ENCODE measurements at regions of chr15 and their contacts with region 1.

Region 1: GRCh38 chr15:42474827-42475226 is 16.1 kb downstream of the ZNF106 start:
- DNase-seq: no peak
- ATAC-seq: no peak
- H3K4me3 ChIP-seq: no peak overlapping the region
- H3K27ac ChIP-seq: no peak overlapping the region
- H3K4me1 ChIP-seq: peaks cover 3% of the 10 kb centered on the region; the same call in 1 of the 2 replicates
- H3K27me3 ChIP-seq: no peaks in the 10 kb centered on the region
- CTCF ChIP-seq: no peak
- POLR2A ChIP-seq: no peak
- RAD21 ChIP-seq: no peak

Region 2: GRCh38 chr15:41849861-41850260 is 625.0 kb before region 1 on chr15:
- CTCF ChIA-PET with region 1: no interaction called
- POLR2A ChIA-PET with region 1: no interaction called
- dilution Hi-C with region 1: no loop called
- in situ Hi-C with region 1: no loop called
- intact Hi-C with region 1: no loop called
- DNase-seq: no peak
- ATAC-seq: no peak
- H3K4me3 ChIP-seq: no peak overlapping the region
- H3K27ac ChIP-seq: no peak overlapping the region
- H3K4me1 ChIP-seq: no peaks in the 10 kb centered on the region; the same call in 1 of the 2 replicates
- H3K27me3 ChIP-seq: peaks cover 12% of the 10 kb centered on the region; the same call in 1 of the 2 replicates
- CTCF ChIP-seq: no peak
- POLR2A ChIP-seq: no peak
- RAD21 ChIP-seq: no peak

Region 3: GRCh38 chr15:42084460-42085235 is 390.2 kb before region 1 on chr15:
- CTCF ChIA-PET with region 1: no interaction called
- POLR2A ChIA-PET with region 1: no interaction called
- dilution Hi-C with region 1: no loop called
- in situ Hi-C with region 1: no loop called
- intact Hi-C with region 1: loop called (anchors 5 kb)
- DNase-seq: peak; percentile 37
- ATAC-seq: peak; percentile 99
- H3K4me3 ChIP-seq: no peak overlapping the region
- H3K27ac ChIP-seq: no peak overlapping the region
- H3K4me1 ChIP-seq: no peaks in the 10 kb centered on the region
- H3K27me3 ChIP-seq: peaks cover 81% of the 10 kb centered on the region
- CTCF ChIP-seq: peak; percentile 89
- POLR2A ChIP-seq: no peak
- RAD21 ChIP-seq: peak; percentile 73

Region 4: DNA sequence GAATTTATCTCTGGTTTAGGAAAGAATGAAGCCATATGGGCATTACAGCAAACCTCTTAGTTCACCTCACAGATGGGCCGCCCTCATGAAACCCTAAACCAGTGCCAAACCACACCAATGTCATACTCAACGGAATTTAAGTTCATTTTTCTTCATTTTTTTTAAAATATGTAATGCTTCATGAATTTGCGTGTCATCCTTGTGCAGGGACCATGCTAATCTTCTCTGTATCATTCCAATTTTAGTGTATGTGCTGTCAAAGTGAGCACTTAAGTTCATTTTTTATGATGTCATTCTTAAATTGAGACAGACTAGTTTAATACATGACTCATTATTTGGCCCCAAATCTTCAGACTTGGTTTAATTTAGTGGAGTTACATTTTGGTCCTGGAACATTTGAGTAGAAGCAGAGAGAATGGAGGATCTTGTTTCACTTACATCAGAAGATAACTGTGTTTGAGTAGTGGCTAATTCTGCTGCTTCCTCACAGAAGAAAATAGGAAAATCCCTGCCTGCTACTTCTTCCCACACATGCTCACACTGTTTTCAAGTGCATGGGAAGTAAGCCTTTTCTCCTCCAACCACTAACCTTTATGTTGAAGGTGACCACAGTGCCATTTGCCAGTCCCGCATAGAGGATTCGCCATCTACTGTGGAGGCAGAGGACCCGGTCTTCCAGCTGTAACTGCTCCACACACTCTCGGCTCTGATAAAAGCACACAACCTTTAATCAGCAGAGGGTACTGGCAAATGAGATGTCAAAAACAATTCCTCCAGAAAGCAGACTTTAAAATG is 47.2 kb before region 1 on chr15:
- CTCF ChIA-PET with region 1: no interaction called
- POLR2A ChIA-PET with region 1: interaction called, 12 read pairs
- dilution Hi-C with region 1: no loop called
- in situ Hi-C with region 1: no loop called
- intact Hi-C with region 1: loop called (anchors 2 kb)
- DNase-seq: peak; percentile 95
- ATAC-seq: peak; percentile 81
- H3K4me3 ChIP-seq: no peak overlapping the region
- H3K27ac ChIP-seq: peak overlapping the region; percentile 66; the same call in 1 of the 2 replicates
- H3K4me1 ChIP-seq: peaks cover 3% of the 10 kb centered on the region
- H3K27me3 ChIP-seq: no peaks in the 10 kb centered on the region
- CTCF ChIP-seq: no peak
- POLR2A ChIP-seq: no peak
- RAD21 ChIP-seq: no peak

Region 5: GRCh38 chr15:42879443-42879842 is 404.6 kb after region 1 on chr15:
- CTCF ChIA-PET with region 1: no interaction called
- POLR2A ChIA-PET with region 1: no interaction called
- dilution Hi-C with region 1: no loop called
- in situ Hi-C with region 1: no loop called
- intact Hi-C with region 1: no loop called
- DNase-seq: no peak
- ATAC-seq: no peak
- H3K4me3 ChIP-seq: no peak overlapping the region
- H3K27ac ChIP-seq: no peak overlapping the region
- H3K4me1 ChIP-seq: no peaks in the 10 kb centered on the region
- H3K27me3 ChIP-seq: no peaks in the 10 kb centered on the region
- CTCF ChIP-seq: no peak
- POLR2A ChIP-seq: no peak
- RAD21 ChIP-seq: no peak